ENCODE measurements at regions of chr4 and their contacts with region 1.

Region 1: DNA sequence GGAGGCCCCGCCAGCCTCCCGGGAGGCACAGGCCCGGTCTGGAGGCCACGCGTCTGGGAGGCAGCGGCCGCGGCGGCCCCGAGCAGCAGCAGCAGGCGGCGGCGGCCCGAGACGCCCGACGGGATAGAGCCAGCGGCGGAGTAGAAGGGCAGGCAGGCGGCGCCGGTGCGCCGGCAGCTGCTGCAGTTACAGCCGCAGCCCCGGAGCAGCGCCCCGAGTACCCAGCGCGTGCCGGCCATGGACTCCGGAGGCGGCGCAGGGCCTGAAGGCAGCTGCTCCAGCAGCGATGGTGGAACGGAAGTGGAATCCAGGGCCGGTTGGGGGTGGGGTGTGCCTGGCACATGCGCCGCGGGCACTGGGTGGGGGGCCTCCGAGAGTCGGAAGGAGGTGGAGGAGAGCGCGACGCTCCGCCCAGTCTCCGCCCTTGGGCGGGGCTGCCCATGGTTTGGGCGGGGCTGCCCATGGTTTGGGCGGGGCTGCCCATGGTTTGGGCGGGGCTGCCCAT is at the start of gene GRSF1:
- DNase-seq: peak; percentile 84 to 91
- H3K4me3 ChIP-seq: peak within 1 kb of the TSS; percentile 87 to 98 (median 93)
- H3K27ac ChIP-seq: peak within 1 kb of the TSS; percentile 91 to 98
- H3K4me1 ChIP-seq: no peaks in the 10 kb centered on the region
- H3K27me3 ChIP-seq: no peaks in the 10 kb centered on the region
- CTCF ChIP-seq: no peak
- POLR2A ChIP-seq: no peak
- total RNA-seq, gene GRSF1: 37.0 to 56.8 (median 55.0) TPM

Region 2: GRCh38 chr4:70788733-70789132 is 50.9 kb before region 1 on chr4:
- intact Hi-C with region 1: loop called (anchors 1 kb)
- DNase-seq: no peak
- H3K4me3 ChIP-seq: no peak overlapping the region
- H3K27ac ChIP-seq: no peak overlapping the region
- H3K4me1 ChIP-seq: no peaks in the 10 kb centered on the region
- H3K27me3 ChIP-seq: no peaks in the 10 kb centered on the region
- CTCF ChIP-seq: no peak
- POLR2A ChIP-seq: no peak

Measured in breast epithelium (tissue), 4 donors.